K562 (cell line): ENCODE measurements at regions of chr15 and their contacts with region 1.

Region 1: DNA sequence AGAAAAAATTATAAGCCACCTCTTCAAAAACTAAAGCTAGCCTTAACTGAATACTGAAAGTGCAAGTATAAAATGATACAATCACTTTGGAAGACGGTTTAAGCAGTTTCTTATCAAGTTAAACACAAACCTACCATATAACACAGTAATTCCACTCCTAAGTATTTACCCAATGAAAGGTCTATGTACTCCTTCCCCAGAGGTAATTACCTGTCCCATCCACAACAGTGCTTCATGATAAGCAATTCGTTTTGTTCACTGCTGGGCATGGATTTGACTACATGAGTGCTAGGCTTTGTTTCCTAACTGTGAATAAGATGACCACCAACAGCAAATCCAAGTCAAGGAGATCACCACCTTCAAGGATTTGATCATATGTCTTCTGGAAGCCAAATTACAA is 4.3 kb downstream of the COX5A start:
- DNase-seq: no peak
- ATAC-seq: no peak
- H3K4me3 ChIP-seq: no peak overlapping the region; the same call in 1 of the 2 replicates
- H3K27ac ChIP-seq: no peak overlapping the region
- H3K4me1 ChIP-seq: peaks cover 19 to 27% of the 10 kb centered on the region in 2 experiments
- H3K27me3 ChIP-seq: no peaks in the 10 kb centered on the region
- CTCF ChIP-seq: no peak
- EP300 ChIP-seq: no peak
- POLR2A ChIP-seq: no peak
- RAD21 ChIP-seq: no peak

Region 2: GRCh38 chr15:74906446-74907162 is 27.0 kb before region 1 on chr15 and contains the start of gene FAM219B:
- CTCF ChIA-PET with region 1: no interaction called
- POLR2A ChIA-PET with region 1: interaction called, 15 read pairs
- in situ Hi-C with region 1: no loop called
- intact Hi-C with region 1: no loop called
- DNase-seq: peak; percentile 94 to 96 (median 95)
- ATAC-seq: peak; percentile 97
- H3K4me3 ChIP-seq: peak within 1 kb of the TSS; percentile 95
- H3K27ac ChIP-seq: peak within 1 kb of the TSS; percentile 89
- H3K4me1 ChIP-seq: peaks cover 11 to 14% of the 10 kb centered on the region in 2 experiments; a peak in 4 of 5 replicates
- H3K27me3 ChIP-seq: no peaks in the 10 kb centered on the region
- CTCF ChIP-seq: no peak; a peak in 1 of 6 replicates
- EP300 ChIP-seq: no peak
- POLR2A ChIP-seq: peak; percentile 87
- RAD21 ChIP-seq: no peak
- polyA plus RNA-seq, gene FAM219B: 6.8 to 10.2 TPM

Region 3: GRCh38 chr15:74920456-74920855 is 13.1 kb before region 1 on chr15:
- CTCF ChIA-PET with region 1: no interaction called
- POLR2A ChIA-PET with region 1: interaction called, 14 read pairs
- in situ Hi-C with region 1: no loop called
- intact Hi-C with region 1: no loop called
- DNase-seq: no peak
- ATAC-seq: no peak
- H3K4me3 ChIP-seq: no peak overlapping the region
- H3K27ac ChIP-seq: no peak overlapping the region
- H3K4me1 ChIP-seq: no peaks in the 10 kb centered on the region
- H3K27me3 ChIP-seq: no peaks in the 10 kb centered on the region
- CTCF ChIP-seq: no peak
- EP300 ChIP-seq: no peak
- POLR2A ChIP-seq: no peak
- RAD21 ChIP-seq: no peak

Region 4: DNA sequence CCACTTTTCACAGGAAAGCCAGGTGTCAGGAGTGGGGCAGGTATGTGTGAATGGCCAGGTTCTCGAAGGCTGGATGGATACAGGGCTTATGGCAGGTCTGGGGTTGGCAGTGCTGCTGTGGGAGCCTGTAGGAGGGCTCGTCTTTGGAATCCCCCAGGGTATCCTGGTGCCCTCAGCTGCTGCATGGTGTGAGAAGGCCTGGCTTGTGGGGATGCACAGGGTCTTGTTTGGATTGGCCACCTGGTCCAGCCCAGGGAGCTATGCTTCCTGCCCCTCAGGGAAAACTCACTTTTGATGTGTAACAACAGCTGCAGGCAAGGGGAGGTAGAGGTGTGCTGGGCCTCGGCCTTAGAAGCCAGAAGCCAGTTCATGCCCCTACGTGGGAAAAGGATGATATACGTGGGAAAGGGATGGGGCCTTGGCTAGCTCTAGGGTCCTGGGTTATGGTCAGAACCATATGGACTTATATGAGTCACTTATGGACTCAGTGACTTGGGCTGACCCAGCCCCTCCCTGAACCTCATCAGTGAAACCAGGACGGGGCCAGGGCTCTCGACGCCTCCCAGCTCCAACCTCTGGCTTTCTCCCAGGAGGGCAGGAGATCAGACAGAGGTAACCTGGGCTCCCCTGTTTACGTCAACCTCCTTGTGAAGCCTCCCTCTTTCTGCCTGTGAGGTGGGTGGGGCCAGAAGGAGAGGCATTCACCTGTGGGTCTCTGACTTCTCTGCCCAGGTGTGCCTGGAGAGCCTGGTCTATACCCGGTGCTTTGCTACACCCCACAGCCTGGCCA is 816.9 kb after region 1 on chr15:
- CTCF ChIA-PET with region 1: no interaction called
- POLR2A ChIA-PET with region 1: no interaction called
- in situ Hi-C with region 1: no loop called
- intact Hi-C with region 1: no loop called
- DNase-seq: no peak
- ATAC-seq: no peak
- H3K4me3 ChIP-seq: no peak overlapping the region
- H3K27ac ChIP-seq: no peak overlapping the region
- H3K4me1 ChIP-seq: peaks cover 0 to 4% of the 10 kb centered on the region in 2 experiments; a peak in 1 of 5 replicates
- H3K27me3 ChIP-seq: no peaks in the 10 kb centered on the region
- CTCF ChIP-seq: no peak
- EP300 ChIP-seq: no peak
- POLR2A ChIP-seq: no peak
- RAD21 ChIP-seq: no peak